Activated naive CD4-positive, alpha-beta T cell treated with anti-CD3 and anti-CD28 coated beads, Interleukin-2, amount 10 ng/mL, durations not matched to agents 7 days and 5 days (primary cell): ENCODE measurements at regions of chr3 and their contacts with region 1.

Region 1: DNA sequence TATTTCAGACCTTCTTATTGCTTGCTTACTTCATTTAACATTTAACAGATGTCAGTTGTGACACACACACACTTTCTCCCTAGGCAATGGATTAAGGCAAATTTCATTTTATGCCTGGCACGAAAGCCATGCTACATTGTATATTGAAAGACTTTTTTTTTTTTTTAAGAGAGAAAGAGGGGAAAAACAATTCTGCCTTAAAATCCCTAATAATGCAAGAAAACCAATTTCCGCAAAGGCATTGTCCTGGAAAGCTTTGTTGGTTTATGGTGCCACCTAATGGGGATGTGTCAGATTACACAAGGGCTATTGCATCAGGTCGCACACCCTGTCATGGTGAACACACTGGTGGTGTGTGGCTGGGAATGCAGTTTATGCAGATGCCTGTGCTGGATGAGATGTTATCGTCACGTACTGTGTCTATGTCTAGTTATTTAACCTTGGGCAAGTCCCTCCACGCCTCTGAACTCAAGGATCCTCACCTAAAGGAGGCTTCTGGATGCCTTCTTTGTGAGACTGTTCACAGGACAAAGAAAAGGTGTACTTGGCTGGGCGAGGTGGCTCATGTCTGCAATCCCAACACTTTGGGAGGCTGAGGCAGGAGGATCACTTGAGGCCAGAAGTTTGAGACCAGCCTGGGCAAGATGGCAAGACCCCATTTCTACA is 37.3 kb upstream of the RFTN1 start:
- DNase-seq: peak; percentile 82
- H3K4me3 Mint-ChIP-seq: no peak overlapping the region
- H3K27ac Mint-ChIP-seq: peak overlapping the region; percentile 39
- H3K4me1 Mint-ChIP-seq: peaks cover 10% of the 10 kb centered on the region
- H3K27me3 Mint-ChIP-seq: peaks cover 34% of the 10 kb centered on the region

Region 2: DNA sequence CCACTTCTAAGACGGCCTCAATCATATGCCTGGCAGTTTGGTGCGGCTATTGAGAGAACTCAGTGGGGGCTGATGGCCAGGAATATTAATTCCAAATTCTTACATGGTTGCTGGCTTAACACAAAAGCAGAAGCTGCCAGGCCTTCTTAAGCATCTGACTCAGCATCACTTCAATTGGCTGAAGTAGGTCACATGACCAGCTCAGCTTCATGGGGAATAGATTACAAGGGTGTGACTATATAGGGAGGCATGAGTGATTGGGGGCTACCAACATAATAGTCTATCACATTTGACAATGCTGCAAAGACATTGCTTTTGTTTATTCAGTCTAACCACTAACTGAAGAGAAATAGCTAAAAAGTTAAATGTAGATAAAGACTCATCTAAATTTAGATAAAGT is 651.4 kb before region 1 on chr3:
- CTCF ChIA-PET with region 1: no interaction called
- DNase-seq: no peak
- H3K4me3 Mint-ChIP-seq: no peak overlapping the region
- H3K27ac Mint-ChIP-seq: no peak overlapping the region
- H3K4me1 Mint-ChIP-seq: no peaks in the 10 kb centered on the region
- H3K27me3 Mint-ChIP-seq: no peaks in the 10 kb centered on the region

Region 3: DNA sequence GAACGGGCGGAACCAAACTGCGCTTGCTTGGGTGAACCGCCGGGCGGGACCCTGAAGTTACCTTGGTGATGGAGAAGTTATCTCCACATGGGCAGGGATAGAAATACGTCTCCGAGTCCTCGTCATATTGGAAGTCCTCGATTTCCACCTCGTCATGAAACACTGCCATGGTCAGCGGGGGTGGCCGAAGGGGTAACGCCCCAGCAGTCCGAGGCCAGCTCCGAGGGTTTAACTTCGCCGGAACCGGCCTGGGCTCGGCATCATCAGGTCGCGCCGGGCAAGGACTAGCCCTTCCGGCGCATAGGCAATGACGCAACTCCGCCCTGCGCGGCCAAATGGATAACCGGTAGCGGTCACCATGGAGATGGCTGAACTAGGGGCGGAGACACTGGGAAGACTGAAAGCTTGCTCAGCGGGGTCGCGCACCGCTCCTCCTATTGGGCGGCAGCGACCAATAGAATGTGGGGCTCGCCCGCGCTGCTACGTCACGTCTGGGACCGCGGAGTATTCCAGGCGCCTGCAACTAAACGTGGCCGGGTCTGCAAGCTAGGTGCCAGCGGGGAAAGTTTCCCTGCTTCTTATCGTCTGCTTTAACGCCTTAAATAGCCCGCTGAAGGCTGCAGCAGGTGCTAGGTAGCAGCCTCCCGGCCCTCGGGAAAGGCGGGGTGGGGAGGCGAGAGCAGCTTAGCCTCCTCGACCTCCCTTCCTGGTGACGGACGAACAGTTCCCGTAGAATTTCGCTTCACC is 285.9 kb before region 1 on chr3 and contains the starts of genes DPH3 and OXNAD1:
- CTCF ChIA-PET with region 1: interaction called, 37 read pairs
- DNase-seq: peak; percentile 99
- H3K4me3 Mint-ChIP-seq: peak within 1 kb of the TSS; percentile 97
- H3K27ac Mint-ChIP-seq: peak within 1 kb of the TSS; percentile 96
- H3K4me1 Mint-ChIP-seq: peaks cover 39% of the 10 kb centered on the region
- H3K27me3 Mint-ChIP-seq: no peaks in the 10 kb centered on the region

Region 4: GRCh38 chr3:16337856-16338540 is 212.8 kb before region 1 on chr3:
- CTCF ChIA-PET with region 1: interaction called, 12 read pairs
- DNase-seq: peak; percentile 79
- H3K4me3 Mint-ChIP-seq: no peak overlapping the region
- H3K27ac Mint-ChIP-seq: peak overlapping the region; percentile 76
- H3K4me1 Mint-ChIP-seq: peaks cover 50% of the 10 kb centered on the region
- H3K27me3 Mint-ChIP-seq: no peaks in the 10 kb centered on the region